A673 (cell line): ENCODE measurements at regions of chr14 and their contacts with region 1.

Region 1: GRCh38 chr14:79649856-79650255 is 561.4 kb downstream of the DIO2 start:
- DNase-seq: no peak
- H3K4me3 ChIP-seq: no peak overlapping the region
- H3K27ac ChIP-seq: no peak overlapping the region
- H3K4me1 ChIP-seq: no peaks in the 10 kb centered on the region
- H3K27me3 ChIP-seq: no peaks in the 10 kb centered on the region
- CTCF ChIP-seq: no peak

Region 2: DNA sequence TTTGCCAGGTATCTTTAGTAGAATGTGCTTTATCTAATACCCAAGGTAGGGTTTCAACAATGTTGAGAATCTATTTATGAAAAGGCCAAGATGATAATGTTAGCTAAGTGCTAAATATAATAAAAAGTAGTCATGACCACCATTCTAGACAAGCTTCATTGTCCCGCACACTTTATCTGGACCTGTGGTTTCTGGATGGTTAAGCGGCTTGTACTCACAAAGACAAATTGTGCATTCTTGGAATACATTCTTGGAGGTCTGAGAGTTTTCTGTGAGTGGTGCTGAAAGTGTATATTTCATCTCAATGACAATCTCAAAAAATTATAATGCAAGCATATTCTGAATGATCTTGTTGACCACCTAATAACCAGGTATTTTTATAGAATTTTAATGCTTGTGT is 85.5 kb before region 1 on chr14:
- CTCF ChIA-PET with region 1: no interaction called
- POLR2A ChIA-PET with region 1: no interaction called
- intact Hi-C with region 1: no loop called
- DNase-seq: no peak
- H3K4me3 ChIP-seq: no peak overlapping the region
- H3K27ac ChIP-seq: no peak overlapping the region
- H3K4me1 ChIP-seq: peaks cover 7% of the 10 kb centered on the region
- H3K27me3 ChIP-seq: no peaks in the 10 kb centered on the region
- CTCF ChIP-seq: no peak

Region 3: GRCh38 chr14:79638672-79639266 is 11.1 kb before region 1 on chr14:
- CTCF ChIA-PET with region 1: no interaction called
- POLR2A ChIA-PET with region 1: no interaction called
- intact Hi-C with region 1: loop called (anchors 1 kb)
- DNase-seq: no peak
- H3K4me3 ChIP-seq: no peak overlapping the region
- H3K27ac ChIP-seq: no peak overlapping the region
- H3K4me1 ChIP-seq: no peaks in the 10 kb centered on the region
- H3K27me3 ChIP-seq: no peaks in the 10 kb centered on the region
- CTCF ChIP-seq: no peak